ENCODE measurements at regions of chr2 and their contacts with region 1.

Region 1: GRCh38 chr2:68157402-68158133 is at the start of gene PNO1:
- DNase-seq: peak; percentile 96 to 97 (median 96)
- ATAC-seq: peak; percentile 97 to 99 (median 98)
- H3K4me3 ChIP-seq: peak within 1 kb of the TSS; percentile 61 to 97 (median 86)
- H3K27ac ChIP-seq: peak within 1 kb of the TSS; percentile 87 to 98 (median 94)
- H3K4me1 ChIP-seq: peaks cover 0 to 45% (median 32%) of the 10 kb centered on the region in 12 donors
- H3K27me3 ChIP-seq: no peaks in the 10 kb centered on the region
- CTCF ChIP-seq: no peak
- POLR2A ChIP-seq: peak in 1 of 2 donors; percentile 50
- total RNA-seq, gene PNO1: 6.6 to 11.3 (median 8.8) TPM

Region 2: DNA sequence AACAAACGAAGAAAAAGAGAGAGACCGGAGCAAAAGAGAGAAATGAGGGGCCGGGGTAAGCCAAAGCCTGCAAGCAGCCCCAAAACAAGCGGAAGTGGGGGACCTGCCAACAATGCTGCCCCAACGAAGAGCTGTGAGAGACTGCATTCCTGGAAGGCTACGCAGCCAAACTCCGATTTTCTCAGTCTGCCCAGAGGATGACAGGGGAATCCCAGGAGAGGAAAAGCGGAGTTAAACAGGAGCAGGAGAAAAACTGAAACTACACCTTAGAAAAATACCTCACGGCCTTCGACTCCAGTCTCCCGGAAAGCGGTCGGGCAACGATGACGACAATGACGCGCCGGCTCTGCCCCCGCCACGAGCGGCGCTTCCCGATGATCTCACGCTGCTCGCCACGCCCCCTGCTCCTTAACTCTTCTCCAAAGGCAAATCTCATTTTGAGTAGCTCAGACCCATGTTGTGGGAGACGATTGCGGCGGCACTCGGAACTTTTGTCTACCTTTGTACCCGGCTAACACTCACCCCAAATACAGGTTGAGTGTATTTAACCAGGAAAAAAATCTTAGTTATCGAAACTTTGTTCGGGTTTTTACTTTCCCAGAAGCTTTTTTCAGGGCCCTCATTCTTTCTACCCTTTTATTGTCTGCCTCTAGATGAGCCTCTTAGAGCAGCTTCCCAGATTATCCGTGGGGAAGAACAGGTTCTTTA is 94.7 kb before region 1 on chr2 and contains the start of gene C1D:
- intact Hi-C with region 1: loop called in 1 of 10 experiments (anchors 5 kb)
- DNase-seq: peak; percentile 95 to 96 (median 95)
- ATAC-seq: peak; percentile 96 to 99 (median 99)
- H3K4me3 ChIP-seq: peak within 1 kb of the TSS; percentile 57 to 86 (median 76)
- H3K27ac ChIP-seq: peak within 1 kb of the TSS; percentile 27 to 90 (median 81)
- H3K4me1 ChIP-seq: peaks cover 0 to 51% (median 33%) of the 10 kb centered on the region in 12 donors
- H3K27me3 ChIP-seq: no peaks in the 10 kb centered on the region
- CTCF ChIP-seq: no peak
- POLR2A ChIP-seq: peak in 1 of 2 donors; percentile 67
- total RNA-seq, gene C1D: 12.5 to 36.6 (median 16.9) TPM

Region 3: DNA sequence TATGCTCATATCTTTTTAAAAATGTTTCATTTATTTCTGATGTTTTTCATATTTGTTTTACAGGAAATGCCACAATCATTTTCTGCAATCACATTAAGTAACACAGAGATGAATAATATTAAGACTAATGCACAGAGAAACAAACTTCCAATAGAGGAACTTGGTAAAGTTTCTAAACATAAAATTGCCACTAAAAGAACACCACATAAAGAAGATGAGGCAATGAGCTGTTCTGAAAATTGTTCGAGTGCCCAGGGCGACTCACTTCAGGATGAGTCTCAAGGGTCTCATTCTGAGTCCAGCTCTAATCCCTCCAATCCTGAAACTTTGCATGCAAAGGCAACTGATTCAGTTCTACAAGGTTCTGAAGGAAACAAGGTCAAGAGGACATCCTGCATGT is 380.2 kb after region 1 on chr2:
- intact Hi-C with region 1: no loop called
- DNase-seq: no peak
- ATAC-seq: no peak
- H3K4me3 ChIP-seq: no peak overlapping the region
- H3K27ac ChIP-seq: no peak overlapping the region
- H3K4me1 ChIP-seq: peaks cover 0 to 9% (median 0%) of the 10 kb centered on the region in 12 donors
- H3K27me3 ChIP-seq: no peaks in the 10 kb centered on the region
- CTCF ChIP-seq: no peak
- POLR2A ChIP-seq: no peak

Measured in heart left ventricle (tissue), 16 donors.